BJ (cell line): ENCODE measurements at regions of chr10 and their contacts with region 1.

Region 1: DNA sequence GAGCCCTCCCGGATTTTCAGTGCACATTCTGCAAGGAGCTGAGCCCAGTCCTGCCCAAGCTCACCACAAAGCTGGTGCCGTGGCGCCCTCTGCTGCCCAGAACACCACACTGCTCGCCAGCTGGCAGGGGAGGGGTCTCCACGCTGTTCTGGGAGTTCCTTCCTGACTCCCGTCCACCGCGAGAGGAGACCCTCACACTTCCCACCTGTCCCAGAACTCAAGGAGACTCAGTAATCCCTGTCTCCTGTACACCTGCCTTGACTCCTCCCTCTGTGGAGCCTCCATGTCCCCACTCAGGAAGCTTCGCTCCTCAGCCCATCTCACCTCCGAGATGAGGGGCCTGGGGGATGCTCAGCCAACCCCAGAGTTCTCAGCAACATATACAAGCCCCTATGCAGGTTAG is 11.3 kb downstream of the C10orf105 start:
- DNase-seq: no peak
- H3K4me3 ChIP-seq: no peak overlapping the region
- H3K27me3 ChIP-seq: peaks cover 2% of the 10 kb centered on the region; the same call in 1 of the 2 replicates
- CTCF ChIP-seq: peak; percentile 82

Region 2: GRCh38 chr10:71494980-71495381 is 213.3 kb before region 1 on chr10:
- CTCF ChIA-PET with region 1: no interaction called
- POLR2A ChIA-PET with region 1: no interaction called
- DNase-seq: no peak
- H3K4me3 ChIP-seq: no peak overlapping the region
- H3K27me3 ChIP-seq: peaks cover 7% of the 10 kb centered on the region
- CTCF ChIP-seq: no peak

Region 3: DNA sequence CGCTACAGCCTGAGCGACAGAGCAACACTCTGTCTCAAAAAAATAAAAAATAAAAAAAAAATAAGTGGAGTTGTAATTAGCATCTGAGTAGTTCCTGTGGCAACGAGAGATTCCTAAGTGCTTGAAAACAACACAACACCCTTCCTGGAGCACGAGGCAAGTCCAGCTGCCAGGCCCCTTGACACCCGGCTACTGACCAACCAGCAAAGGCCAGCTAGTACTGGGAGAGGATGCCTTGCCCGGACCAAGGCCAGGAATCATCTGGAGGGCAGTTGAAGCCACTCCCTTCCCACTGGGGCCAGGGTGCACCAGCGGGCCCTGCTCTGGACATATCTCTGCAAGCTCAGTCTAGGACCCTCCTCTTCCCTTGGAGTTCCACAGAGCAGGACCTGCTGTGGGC is 10.7 kb after region 1 on chr10:
- CTCF ChIA-PET with region 1: interaction called, 18 read pairs
- POLR2A ChIA-PET with region 1: no interaction called
- DNase-seq: no peak
- H3K4me3 ChIP-seq: no peak overlapping the region
- H3K27me3 ChIP-seq: no peaks in the 10 kb centered on the region
- CTCF ChIP-seq: no peak